Pancreas (tissue), 10 donors: ENCODE measurements at regions of chr12 and their contacts with region 1.

Region 1: GRCh38 chr12:40622246-40622838 is 69.9 kb upstream of the CNTN1 start:
- DNase-seq: peak in 4 of 6 donors; percentile 6 to 73 (median 49)
- ATAC-seq: peak in 3 of 4 donors; percentile 47 to 56 (median 54)
- H3K4me3 ChIP-seq: no peak overlapping the region
- H3K27ac ChIP-seq: no peak overlapping the region
- H3K4me1 ChIP-seq: no peaks in the 10 kb centered on the region
- H3K27me3 ChIP-seq: no peaks in the 10 kb centered on the region
- CTCF ChIP-seq: peak; percentile 51 to 74 (median 63)

Region 2: GRCh38 chr12:40921563-40922163 is 299.3 kb after region 1 on chr12:
- intact Hi-C with region 1: loop called in 1 of 3 experiments (anchors 5 kb)
- DNase-seq: no peak
- ATAC-seq: peak in 2 of 4 donors; percentile 26 to 32
- H3K4me3 ChIP-seq: no peak overlapping the region
- H3K27ac ChIP-seq: no peak overlapping the region
- H3K4me1 ChIP-seq: no peaks in the 10 kb centered on the region
- H3K27me3 ChIP-seq: peaks cover 0 to 4% (median 0%) of the 10 kb centered on the region in 4 donors
- CTCF ChIP-seq: peak; percentile 48 to 74 (median 63)